Activated T-helper 1 cell treated with anti-CD3 and anti-CD28 coated beads, Interleukin-12 subunit alpha, Interleukin-12 subunit beta, Interleukin-2, Interleukin-4 antibody, amounts not matched to agents 30 ng/mL and 10 ng/mL and 1 ng/mL, durations not matched to agents 14 hours and 24 hours and 36 hours (primary cell): ENCODE measurements at regions of chr14 and their contacts with region 1.

Region 1: GRCh38 chr14:49405291-49405690 is 180.9 kb downstream of the RPS29 start:
- DNase-seq: no peak
- H3K4me3 Mint-ChIP-seq: no peak overlapping the region
- H3K27ac Mint-ChIP-seq: no peak overlapping the region
- H3K4me1 Mint-ChIP-seq: no peaks in the 10 kb centered on the region
- H3K27me3 Mint-ChIP-seq: no peaks in the 10 kb centered on the region

Region 2: DNA sequence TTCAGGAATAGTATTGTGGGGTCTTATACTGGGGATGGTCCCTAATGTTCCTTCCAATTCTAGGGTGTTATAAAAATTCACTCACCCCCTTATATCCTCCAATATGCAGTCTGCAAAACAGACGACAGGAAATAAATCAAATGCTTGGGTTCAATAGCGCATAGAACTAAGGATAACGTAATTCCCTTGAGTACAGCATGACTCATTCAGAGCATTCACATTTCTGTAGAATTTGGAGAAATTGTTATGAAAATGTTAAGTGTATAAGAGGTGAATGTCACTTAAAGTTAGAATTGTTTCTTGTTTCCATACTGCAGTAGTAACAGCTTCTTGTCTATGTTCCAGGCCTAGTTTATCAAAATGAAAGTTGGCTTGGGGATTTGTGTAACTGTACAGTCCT is 90.6 kb before region 1 on chr14:
- intact Hi-C with region 1: no loop called
- DNase-seq: no peak
- H3K4me3 Mint-ChIP-seq: no peak overlapping the region
- H3K27ac Mint-ChIP-seq: no peak overlapping the region
- H3K4me1 Mint-ChIP-seq: no peaks in the 10 kb centered on the region
- H3K27me3 Mint-ChIP-seq: peaks cover 1% of the 10 kb centered on the region

Region 3: DNA sequence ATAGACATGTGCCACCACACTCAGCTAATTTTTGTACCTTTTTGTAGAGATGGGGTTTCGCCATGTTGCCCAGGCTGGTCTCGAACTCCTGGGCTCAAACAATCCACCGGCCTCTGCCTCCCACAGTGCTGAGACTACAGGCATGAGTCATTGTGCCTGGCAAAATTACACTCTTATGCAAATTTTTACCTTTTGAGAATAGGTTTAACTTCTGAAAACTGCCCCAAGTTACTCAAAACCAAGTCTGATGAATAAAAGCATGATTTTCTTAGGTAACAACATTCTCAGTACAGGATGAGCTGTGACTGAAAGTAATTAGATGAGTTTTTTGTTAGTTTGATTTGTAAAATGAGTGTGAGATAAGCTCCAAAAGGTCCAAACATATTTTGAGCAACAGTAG is 14.9 kb after region 1 on chr14:
- intact Hi-C with region 1: loop called (anchors 1 kb)
- DNase-seq: no peak
- H3K4me3 Mint-ChIP-seq: no peak overlapping the region
- H3K27ac Mint-ChIP-seq: no peak overlapping the region
- H3K4me1 Mint-ChIP-seq: peaks cover 7% of the 10 kb centered on the region
- H3K27me3 Mint-ChIP-seq: peaks cover 5% of the 10 kb centered on the region

Region 4: GRCh38 chr14:49633640-49634546 is 228.6 kb after region 1 on chr14:
- intact Hi-C with region 1: no loop called
- DNase-seq: peak; percentile 93
- H3K4me3 Mint-ChIP-seq: peak overlapping the region; percentile 93
- H3K27ac Mint-ChIP-seq: peak overlapping the region; percentile 96
- H3K4me1 Mint-ChIP-seq: peaks cover 39% of the 10 kb centered on the region
- H3K27me3 Mint-ChIP-seq: no peaks in the 10 kb centered on the region

Region 5: GRCh38 chr14:50156111-50156510 is 750.8 kb after region 1 on chr14:
- intact Hi-C with region 1: no loop called
- DNase-seq: no peak
- H3K4me3 Mint-ChIP-seq: no peak overlapping the region
- H3K27ac Mint-ChIP-seq: no peak overlapping the region
- H3K4me1 Mint-ChIP-seq: no peaks in the 10 kb centered on the region
- H3K27me3 Mint-ChIP-seq: no peaks in the 10 kb centered on the region